ENCODE measurements at regions of chr15 and their contacts with region 1.

Region 1: DNA sequence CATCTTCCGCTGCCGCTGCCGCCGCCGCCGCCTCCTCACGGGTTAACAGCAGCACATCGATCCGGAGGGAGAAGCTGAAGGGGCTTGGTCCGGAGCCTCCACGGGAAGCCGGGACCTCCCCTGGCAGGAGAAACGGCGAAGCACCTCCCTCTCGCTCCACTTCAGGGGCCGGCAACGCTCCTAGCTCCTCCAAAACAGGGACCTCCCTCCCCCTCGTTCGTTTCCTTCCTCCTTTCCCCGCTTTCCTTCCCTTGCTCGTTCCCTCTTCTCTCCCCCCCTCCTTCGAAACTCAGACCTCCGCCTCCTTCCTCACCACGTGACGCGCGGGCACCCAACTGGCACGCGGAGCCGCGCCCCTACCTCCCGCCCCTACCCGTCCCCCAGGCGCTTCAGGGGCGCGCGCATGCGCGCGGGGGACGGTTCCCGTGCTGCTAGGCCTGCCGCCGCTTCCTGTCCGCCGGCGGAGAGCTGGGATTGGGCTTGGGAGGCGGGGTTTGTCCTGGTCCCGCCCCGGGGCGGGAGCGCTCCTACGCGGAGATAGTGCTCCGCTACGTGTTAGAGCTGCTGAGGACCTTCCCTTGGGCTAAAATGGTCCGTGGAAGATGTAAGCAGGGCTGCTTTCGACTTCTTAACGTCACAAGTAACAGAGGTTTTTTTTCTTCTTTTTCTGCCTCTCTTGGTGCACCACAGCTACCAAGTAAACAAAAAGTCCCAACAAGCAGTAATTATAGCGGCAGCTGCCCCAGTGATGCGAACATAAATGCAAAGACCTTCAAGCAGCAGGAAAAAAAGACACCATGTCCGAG is at the start of gene ADAM10:
- DNase-seq: peak; percentile 99
- H3K4me3 ChIP-seq: peak within 1 kb of the TSS; percentile 87
- H3K27ac ChIP-seq: peak within 1 kb of the TSS; percentile 84
- H3K4me1 ChIP-seq: peaks cover 32% of the 10 kb centered on the region
- CTCF ChIP-seq: no peak
- total RNA-seq, gene ADAM10: 61.9 and 68.0 TPM in 2 replicates

Region 2: DNA sequence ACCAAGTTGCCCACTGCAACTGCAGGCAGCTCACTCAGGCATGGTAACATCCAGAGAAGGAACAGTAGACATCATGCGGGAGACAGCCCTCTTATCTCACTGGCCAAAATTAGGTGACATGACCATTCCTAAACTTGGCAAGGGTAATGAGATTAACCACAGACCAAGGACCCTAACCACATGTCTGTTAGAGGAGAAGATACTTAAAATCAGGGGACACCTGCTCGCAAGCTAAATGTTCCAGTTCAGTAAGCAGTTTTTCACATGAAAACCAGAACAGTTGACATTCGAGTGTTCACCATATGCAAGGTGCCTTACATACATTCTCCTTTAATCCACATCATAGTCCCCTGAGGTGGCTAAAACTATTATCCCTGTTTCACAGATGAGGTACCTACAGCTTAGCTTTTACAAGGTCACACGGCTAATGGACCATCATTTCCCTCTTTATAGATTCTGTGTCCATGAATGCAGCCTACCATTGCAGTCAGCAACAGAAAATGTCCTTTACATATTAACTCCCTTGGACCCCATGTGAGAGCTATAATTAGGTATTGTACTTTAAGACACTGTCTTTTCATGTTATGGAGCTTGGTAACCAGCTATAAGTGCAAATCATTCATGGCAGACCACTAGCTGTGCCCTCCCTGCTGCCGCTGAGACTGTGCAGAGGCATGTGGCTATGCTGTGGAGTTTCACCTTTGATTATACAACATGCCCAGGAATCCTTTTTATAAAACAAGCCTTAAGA is 163.9 kb before region 1 on chr15:
- CTCF ChIA-PET with region 1: no interaction called
- POLR2A ChIA-PET with region 1: interaction called, 3 read pairs
- intact Hi-C with region 1: loop called (anchors 5 kb)
- DNase-seq: peak; percentile 71
- H3K4me3 ChIP-seq: peak overlapping the region; percentile 36
- H3K27ac ChIP-seq: peak overlapping the region; percentile 78
- H3K4me1 ChIP-seq: peaks cover 27% of the 10 kb centered on the region
- CTCF ChIP-seq: no peak

Region 3: DNA sequence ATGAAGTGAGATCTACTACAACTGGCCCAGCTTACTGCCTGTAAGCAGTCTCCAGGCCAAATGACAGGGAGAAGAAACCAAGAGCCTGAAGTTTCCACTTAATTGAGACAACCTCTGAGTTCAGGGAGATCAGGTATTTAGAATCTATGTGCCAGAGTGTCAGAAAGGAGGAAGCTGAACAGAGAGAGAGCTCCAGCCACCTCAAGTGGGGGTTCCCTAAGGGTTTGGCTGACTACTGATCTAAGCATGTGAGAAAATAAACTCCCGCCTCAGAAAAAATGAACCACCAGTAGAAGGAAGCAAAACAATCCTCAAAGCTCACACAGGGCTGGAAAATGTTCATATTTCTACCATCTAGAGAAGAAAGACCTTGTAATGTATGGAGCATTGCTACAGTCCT is 25.3 kb before region 1 on chr15:
- CTCF ChIA-PET with region 1: interaction called, 3 read pairs
- POLR2A ChIA-PET with region 1: interaction called, 4 read pairs
- intact Hi-C with region 1: loop called (anchors 2 kb)
- DNase-seq: peak; percentile 67
- H3K4me3 ChIP-seq: no peak overlapping the region
- H3K27ac ChIP-seq: peak overlapping the region; percentile 40
- H3K4me1 ChIP-seq: peaks cover 40% of the 10 kb centered on the region
- CTCF ChIP-seq: no peak

Region 4: DNA sequence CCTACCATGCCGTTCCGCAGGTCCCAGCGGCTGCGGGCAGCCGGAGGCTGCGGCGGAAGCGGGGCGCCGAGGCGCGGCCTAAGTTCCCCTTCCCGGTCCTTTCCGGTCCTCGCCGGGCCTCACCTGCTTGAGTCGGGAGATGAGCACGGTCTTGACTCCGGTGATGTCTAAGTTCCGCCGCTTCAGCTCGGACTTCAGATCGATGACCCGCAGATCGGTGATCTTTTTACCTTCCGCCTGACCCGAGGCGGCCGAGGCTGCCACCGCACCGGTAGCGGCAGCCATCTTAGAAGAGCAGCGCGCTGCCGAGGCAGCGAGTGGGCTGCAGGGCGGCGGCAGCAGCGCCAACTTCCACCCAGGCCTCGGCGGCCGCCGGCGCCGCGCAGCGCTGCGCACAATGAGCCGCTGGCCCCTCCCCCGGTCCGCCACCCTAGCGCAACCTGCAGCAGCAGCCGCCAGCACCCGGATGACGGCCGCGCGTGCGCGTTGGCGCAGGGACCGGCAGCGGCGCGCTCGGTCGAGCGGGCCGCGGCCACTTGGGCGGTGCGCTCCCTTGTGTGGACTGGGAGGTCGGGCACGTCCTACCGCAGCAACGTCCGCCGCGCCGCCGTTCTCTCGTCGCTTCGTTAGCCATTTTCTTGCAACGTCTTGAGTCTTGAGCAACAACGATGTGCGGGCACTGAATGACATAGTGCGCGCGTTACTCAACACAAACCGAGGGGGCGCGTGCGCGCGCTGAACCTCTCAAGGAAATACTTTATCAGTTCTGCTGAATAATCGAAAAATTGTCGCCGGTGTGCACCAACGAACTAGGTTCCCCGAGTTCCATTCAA is 183.8 kb after region 1 on chr15 and contains the start of gene SLTM:
- CTCF ChIA-PET with region 1: no interaction called
- POLR2A ChIA-PET with region 1: no interaction called
- intact Hi-C with region 1: loop called (anchors 10 kb)
- DNase-seq: peak; percentile 95
- H3K4me3 ChIP-seq: peak within 1 kb of the TSS; percentile 77
- H3K27ac ChIP-seq: peak within 1 kb of the TSS; percentile 92
- H3K4me1 ChIP-seq: peaks cover 20% of the 10 kb centered on the region
- CTCF ChIP-seq: peak; percentile 58
- total RNA-seq, gene SLTM: 103 and 158 TPM in 2 replicates

Region 5: GRCh38 chr15:58951388-58952007 is 201.8 kb after region 1 on chr15:
- CTCF ChIA-PET with region 1: no interaction called
- POLR2A ChIA-PET with region 1: no interaction called
- intact Hi-C with region 1: no loop called
- DNase-seq: no peak
- H3K4me3 ChIP-seq: no peak overlapping the region
- H3K27ac ChIP-seq: no peak overlapping the region
- H3K4me1 ChIP-seq: no peaks in the 10 kb centered on the region
- CTCF ChIP-seq: no peak